ENCODE measurements at regions of chr12 and their contacts with region 1.

Region 1: DNA sequence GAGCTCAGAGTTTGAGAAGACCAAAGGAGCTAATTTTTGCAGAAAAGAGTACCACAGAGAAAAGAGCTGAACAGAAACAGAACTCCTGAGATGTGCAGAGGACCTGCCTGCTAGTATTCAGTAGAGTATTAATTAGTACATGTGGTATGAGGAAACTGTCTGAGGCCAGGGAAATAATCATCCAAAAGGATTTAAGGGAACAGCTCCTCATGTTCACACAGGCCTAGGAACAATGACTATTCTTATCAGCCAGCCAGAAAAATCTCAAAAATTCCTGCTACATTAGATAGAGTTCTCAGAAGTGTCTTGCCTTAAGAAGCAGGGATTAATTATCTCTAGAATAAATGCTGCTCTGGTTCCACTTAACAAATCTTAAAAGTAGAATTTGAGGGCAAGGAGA is 36.4 kb downstream of the PKP2 start:
- DNase-seq: no peak
- H3K4me3 Mint-ChIP-seq: no peak overlapping the region
- H3K27ac Mint-ChIP-seq: no peak overlapping the region
- H3K4me1 Mint-ChIP-seq: peaks cover 11% of the 10 kb centered on the region
- H3K27me3 Mint-ChIP-seq: no peaks in the 10 kb centered on the region
- CTCF ChIP-seq: no peak

Region 2: DNA sequence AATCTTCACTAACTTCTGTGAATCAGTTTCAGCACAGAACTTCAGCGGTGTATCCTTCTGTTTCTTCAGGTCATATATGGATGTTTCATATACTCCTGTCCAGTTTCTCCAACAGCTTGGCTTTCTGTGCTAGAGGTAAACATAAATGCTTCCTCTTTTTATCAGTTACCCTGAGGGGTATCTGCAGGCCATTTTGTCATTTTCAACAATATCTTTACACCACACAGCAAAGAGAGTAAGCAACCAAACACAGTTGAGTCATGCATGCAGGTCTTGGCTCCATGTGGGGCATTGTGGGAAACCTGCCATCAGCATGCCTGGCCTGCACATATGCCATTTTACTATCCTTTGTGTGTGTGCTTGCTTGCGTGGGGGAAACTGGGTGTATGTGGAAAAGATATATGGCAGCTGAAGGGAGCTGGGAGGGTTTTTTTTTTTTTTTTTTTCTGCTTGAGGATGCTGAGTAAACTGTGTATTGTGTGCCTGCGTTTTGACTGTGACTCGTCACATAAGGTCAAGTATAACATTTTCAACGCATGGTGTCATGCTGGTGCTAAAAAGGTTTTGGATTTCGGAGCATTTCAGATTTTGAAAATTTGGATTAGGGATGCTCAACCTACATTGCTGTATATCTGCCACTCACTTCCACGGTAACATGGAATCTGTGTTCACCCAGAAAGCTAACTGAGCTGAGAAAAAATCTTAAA is 48.3 kb before region 1 on chr12:
- CTCF ChIA-PET with region 1: no interaction called
- intact Hi-C with region 1: loop called (anchors 10 kb)
- DNase-seq: no peak
- H3K4me3 Mint-ChIP-seq: no peak overlapping the region
- H3K27ac Mint-ChIP-seq: no peak overlapping the region
- H3K4me1 Mint-ChIP-seq: no peaks in the 10 kb centered on the region
- H3K27me3 Mint-ChIP-seq: no peaks in the 10 kb centered on the region
- CTCF ChIP-seq: no peak

Measured in Calu3 (cell line).